Posterior vena cava (tissue), 2 donors: ENCODE measurements at regions of chr3 and their contacts with region 1.

Region 1: DNA sequence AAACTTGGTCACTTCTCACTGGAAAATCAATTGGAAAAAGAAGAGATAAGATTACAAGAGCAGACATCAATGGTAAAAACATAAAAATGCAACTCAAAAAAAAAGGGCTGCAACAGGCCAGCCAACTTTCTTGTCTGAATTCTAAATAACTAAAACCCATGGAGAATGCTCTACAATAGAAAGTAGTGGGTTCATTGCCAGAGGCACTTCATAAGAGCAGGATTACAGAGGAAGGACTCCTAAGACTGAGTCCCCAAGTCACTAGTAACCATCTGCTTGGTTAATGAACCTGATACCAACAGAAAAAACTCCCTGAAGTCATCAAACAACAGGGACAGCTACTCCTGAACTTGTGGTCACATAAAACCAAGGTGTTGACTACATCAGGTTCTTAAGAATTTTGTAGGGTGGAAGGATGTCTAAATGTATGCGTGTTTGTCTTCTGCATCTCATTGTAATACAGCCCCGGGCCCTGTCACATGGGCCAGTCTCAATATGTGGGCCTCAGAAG is 148.6 kb downstream of the IMPG2 start:
- DNase-seq: no peak

Region 2: DNA sequence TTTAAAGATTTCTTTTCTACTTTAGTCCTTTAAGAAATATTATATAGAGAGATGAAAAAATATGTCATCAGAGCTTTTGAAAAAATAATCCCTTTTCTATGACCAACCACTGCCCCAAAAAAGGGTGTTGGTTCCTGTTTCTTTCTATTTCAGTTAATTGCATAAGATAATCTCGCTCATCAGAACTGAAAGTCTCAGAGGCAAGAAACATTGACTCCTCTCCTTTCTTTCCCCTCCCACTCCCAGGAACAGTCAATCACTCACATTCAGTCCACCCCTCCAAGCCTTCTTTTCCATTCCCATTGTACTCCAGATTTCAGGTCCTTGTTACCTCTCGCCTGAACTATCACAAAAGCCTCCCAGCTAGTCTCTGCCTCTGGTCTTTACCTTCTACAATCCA is 24.8 kb before region 1 on chr3:
- intact Hi-C with region 1: no loop called
- DNase-seq: no peak

Region 3: GRCh38 chr3:101182734-101183133 is 11.0 kb after region 1 on chr3:
- intact Hi-C with region 1: loop called in 1 of 2 experiments (anchors 1 kb)
- DNase-seq: no peak

Region 4: DNA sequence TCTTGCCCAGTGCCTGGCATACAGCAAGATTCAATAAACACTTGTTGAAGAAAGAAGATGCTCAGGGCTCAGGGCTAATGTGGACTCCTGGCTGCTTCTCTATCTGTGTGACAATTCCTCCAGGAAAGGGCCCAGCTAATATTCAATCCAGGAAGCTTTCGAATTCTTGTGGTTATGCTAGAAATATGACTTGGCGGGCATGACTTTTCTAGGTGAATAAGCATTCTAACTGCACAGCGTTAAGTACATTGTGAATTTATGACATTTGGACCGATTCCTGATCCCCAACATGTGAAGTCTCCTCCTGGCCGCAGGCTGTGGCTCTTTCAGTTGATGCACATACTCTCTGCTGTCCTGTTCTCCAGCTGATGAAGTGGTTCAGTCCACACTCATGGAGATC is 31.7 kb after region 1 on chr3:
- intact Hi-C with region 1: loop called in 1 of 2 experiments (anchors 2 kb)
- DNase-seq: no peak

Region 5: GRCh38 chr3:101253396-101253795 is 81.7 kb after region 1 on chr3:
- intact Hi-C with region 1: no loop called
- DNase-seq: no peak

Region 6: DNA sequence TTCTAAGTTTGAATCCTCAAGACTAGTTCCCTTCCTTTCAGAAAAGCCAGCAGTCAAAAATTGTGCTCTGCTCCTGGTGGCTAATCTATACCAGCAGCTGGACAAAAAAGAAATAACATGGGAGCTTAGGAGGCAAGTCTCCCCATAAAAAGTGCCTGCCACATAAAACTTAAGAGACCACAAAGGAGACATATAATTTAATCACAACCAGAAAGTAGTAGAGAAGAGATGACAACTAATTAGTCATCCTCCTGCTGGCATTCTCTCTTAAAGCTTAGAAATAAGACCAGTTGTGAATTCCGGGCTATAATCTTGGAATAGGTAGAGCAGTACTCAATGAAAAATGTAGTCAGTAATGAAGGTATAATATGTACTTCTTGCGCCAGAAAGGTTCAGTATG is 168.9 kb after region 1 on chr3:
- intact Hi-C with region 1: no loop called
- DNase-seq: no peak